ENCODE measurements at regions of chr1 and their contacts with region 1.

Region 1: GRCh38 chr1:89762779-89763648 is 57.8 kb upstream of the LRRC8D start:
- DNase-seq: peak; percentile 91
- ATAC-seq: peak; percentile 100
- H3K4me3 Mint-ChIP-seq: peak overlapping the region; percentile 80
- H3K27ac Mint-ChIP-seq: peak overlapping the region; percentile 83
- H3K4me1 Mint-ChIP-seq: peaks cover 58% of the 10 kb centered on the region
- H3K27me3 Mint-ChIP-seq: no peaks in the 10 kb centered on the region

Region 2: GRCh38 chr1:89483010-89483756 is 279.8 kb before region 1 on chr1:
- CTCF ChIA-PET with region 1: interaction called, 38 read pairs
- DNase-seq: peak; percentile 89
- ATAC-seq: peak; percentile 82
- H3K4me3 Mint-ChIP-seq: no peak overlapping the region
- H3K27ac Mint-ChIP-seq: no peak overlapping the region
- H3K4me1 Mint-ChIP-seq: peaks cover 19% of the 10 kb centered on the region
- H3K27me3 Mint-ChIP-seq: no peaks in the 10 kb centered on the region

Region 3: DNA sequence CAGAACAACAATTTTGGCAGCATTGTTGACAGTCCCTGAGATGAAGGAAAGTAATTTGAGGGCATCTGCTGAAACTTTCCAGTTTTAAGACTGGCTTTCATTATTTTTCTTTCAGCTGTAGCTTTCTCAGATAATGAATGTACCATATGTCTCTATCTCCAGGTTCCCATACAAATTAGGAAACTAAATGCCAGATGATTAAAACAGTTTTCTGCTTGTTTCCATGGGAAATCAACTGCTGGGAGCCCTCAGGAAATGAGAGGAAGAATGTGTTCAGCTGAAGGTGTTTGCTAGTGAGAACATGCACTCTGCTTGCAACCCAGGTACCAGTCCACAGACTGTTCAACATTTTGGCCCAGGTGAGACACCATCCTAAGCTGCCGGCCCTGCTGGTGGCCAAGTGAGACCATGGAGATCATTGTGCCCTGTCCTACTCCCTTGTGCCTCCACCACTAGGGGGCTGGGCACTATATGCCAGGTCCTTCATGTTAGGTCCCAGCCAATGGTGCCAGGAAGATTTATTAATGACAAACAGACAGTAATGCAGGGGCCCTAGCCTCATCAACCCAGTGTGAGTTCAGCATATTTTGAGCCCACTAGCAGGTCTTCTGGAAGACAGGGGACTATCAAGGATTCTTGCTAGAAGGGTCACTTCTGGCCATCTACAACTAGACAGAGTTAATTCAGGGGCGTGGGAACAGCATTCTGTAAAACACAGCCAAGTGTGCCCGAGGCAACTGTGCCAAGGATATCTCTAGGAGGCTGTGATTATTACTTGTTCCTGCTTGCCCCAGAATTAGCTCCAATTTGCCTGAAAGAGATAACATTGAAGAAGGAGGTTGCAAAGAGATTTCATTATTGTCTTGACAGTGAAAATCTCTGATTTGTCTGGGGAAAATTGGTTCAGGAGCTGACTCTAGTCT is 147.1 kb before region 1 on chr1:
- CTCF ChIA-PET with region 1: interaction called, 26 read pairs
- DNase-seq: no peak
- ATAC-seq: no peak
- H3K4me3 Mint-ChIP-seq: no peak overlapping the region
- H3K27ac Mint-ChIP-seq: no peak overlapping the region
- H3K4me1 Mint-ChIP-seq: peaks cover 62% of the 10 kb centered on the region
- H3K27me3 Mint-ChIP-seq: no peaks in the 10 kb centered on the region

Region 4: GRCh38 chr1:89657886-89658285 is 105.1 kb before region 1 on chr1:
- CTCF ChIA-PET with region 1: interaction called, 20 read pairs
- DNase-seq: no peak
- ATAC-seq: peak; percentile 75
- H3K4me3 Mint-ChIP-seq: peak overlapping the region; percentile 19
- H3K27ac Mint-ChIP-seq: peak overlapping the region; percentile 80
- H3K4me1 Mint-ChIP-seq: peaks cover 86% of the 10 kb centered on the region
- H3K27me3 Mint-ChIP-seq: no peaks in the 10 kb centered on the region

Region 5: GRCh38 chr1:89692601-89693521 is 70.2 kb before region 1 on chr1:
- CTCF ChIA-PET with region 1: interaction called, 15 read pairs
- DNase-seq: no peak
- ATAC-seq: peak; percentile 43
- H3K4me3 Mint-ChIP-seq: no peak overlapping the region
- H3K27ac Mint-ChIP-seq: peak overlapping the region; percentile 74
- H3K4me1 Mint-ChIP-seq: peaks cover 75% of the 10 kb centered on the region
- H3K27me3 Mint-ChIP-seq: no peaks in the 10 kb centered on the region

Region 6: DNA sequence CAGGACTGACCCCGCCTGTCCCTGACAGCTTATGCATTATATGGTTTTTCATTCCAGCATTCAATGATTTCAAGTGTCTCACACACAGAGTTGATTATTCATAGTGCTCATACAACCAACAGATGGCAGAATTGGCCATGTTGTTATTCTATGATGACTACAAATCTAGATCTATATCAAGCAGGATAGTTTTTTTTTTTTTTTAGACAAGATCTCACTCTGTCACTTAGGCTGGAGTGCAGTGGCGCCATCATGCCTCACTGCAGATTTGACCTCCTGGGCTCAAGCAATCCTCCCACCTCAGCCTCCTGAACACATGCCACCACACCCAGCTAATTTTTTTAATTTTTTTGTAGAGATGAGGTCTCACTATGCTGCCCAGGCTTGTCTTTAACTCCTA is 17.7 kb after region 1 on chr1:
- CTCF ChIA-PET with region 1: interaction called, 16 read pairs
- DNase-seq: no peak
- ATAC-seq: peak; percentile 65
- H3K4me3 Mint-ChIP-seq: no peak overlapping the region
- H3K27ac Mint-ChIP-seq: no peak overlapping the region
- H3K4me1 Mint-ChIP-seq: peaks cover 20% of the 10 kb centered on the region
- H3K27me3 Mint-ChIP-seq: no peaks in the 10 kb centered on the region

Region 7: GRCh38 chr1:89822999-89823628 is 60.1 kb after region 1 on chr1:
- CTCF ChIA-PET with region 1: no interaction called
- DNase-seq: no peak
- ATAC-seq: no peak
- H3K4me3 Mint-ChIP-seq: no peak overlapping the region
- H3K27ac Mint-ChIP-seq: no peak overlapping the region
- H3K4me1 Mint-ChIP-seq: peaks cover 21% of the 10 kb centered on the region
- H3K27me3 Mint-ChIP-seq: peaks cover 6% of the 10 kb centered on the region

Measured in activated CD8-positive, alpha-beta memory T cell treated with anti-CD3 and anti-CD28 coated beads, Interleukin-2, amount 10 ng/mL, durations not matched to agents 7 days and 5 days (primary cell).